ENCODE measurements at regions of chr2 and their contacts with region 1.

Region 1: GRCh38 chr2:3130889-3131635 is 246.6 kb downstream of the EIPR1 start:
- DNase-seq: no peak
- ATAC-seq: no peak
- H3K4me3 ChIP-seq: no peak overlapping the region
- H3K27ac ChIP-seq: no peak overlapping the region
- H3K4me1 ChIP-seq: no peaks in the 10 kb centered on the region
- H3K27me3 ChIP-seq: no peaks in the 10 kb centered on the region

Region 2: DNA sequence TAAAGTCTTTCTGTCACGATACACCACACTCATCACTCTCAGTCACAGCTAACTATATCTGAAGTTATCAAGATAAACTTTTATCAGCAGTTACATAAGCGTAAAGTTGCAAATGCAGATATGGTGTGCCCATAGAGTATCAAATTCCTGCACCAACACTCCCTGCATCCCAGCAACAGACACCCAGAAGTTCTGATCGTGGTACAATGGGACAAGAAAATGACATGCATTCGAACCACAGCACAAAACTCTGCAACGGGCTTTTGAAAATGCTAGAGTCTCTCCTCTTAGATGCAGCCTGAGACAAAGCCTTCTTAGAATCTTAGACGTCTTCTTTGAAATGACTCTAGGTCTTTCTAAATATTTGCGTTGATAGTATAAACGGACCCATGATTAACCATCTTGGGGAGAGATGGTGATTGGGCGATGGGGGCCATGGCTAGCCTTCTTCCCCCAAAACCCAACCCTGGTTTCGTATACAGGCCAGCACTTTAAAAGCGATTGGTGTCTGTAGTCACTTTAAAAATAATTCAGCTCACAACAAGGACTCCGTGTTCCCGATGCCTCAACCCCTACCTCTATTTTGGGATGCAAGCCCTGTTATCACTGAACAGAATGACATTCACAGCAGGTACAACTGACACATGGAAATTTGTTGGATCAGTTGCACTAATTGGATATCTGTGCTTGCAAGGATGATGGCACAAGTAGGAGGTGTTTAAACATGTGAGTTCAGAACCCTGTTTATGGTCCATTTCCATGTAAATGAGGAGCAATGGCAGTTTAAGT is 1086.6 kb before region 1 on chr2:
- intact Hi-C with region 1: loop called in 1 of 4 experiments (anchors 10 kb)
- DNase-seq: no peak
- ATAC-seq: peak; percentile 69 to 81
- H3K4me3 ChIP-seq: no peak overlapping the region
- H3K27ac ChIP-seq: peak overlapping the region; percentile 74
- H3K4me1 ChIP-seq: peaks cover 2% of the 10 kb centered on the region
- H3K27me3 ChIP-seq: no peaks in the 10 kb centered on the region

Region 3: DNA sequence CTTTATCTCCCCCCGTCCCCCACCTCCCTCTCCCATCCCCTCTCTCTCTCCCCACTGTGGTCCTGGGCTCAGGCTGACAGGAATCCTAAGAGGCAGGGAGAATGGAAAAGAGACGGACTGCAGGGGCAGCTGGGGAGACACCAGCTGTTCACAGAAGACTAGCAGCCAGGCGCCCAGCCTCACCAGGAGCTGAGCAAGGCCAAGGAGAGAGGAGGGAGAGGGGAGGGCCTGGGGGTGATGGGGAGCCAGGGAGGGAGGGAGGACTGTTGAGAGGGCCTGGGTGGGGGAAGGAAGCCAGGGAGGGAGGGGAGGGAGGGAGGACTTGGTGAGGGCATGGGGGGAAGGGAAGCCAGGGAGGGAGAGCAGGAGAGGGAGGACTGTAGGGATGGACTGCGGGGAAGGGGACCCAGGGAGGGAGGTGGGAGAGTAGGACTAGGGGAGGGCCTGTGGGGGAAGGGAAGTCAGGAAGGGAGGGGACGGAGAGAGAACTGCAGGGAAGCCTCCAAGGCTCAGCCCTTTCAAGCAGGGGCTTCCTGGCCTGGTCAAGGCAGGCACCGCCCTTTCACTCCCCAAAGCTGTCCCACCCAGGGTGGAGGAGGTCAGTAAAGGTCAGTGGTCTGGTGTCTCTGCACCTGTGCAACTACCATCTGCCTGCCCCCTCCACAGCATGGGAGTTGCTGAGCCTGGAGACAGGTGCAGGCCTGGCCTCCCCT is 282.3 kb before region 1 on chr2:
- intact Hi-C with region 1: no loop called
- DNase-seq: no peak
- ATAC-seq: no peak
- H3K4me3 ChIP-seq: no peak overlapping the region
- H3K27ac ChIP-seq: no peak overlapping the region
- H3K4me1 ChIP-seq: no peaks in the 10 kb centered on the region
- H3K27me3 ChIP-seq: no peaks in the 10 kb centered on the region

Region 4: DNA sequence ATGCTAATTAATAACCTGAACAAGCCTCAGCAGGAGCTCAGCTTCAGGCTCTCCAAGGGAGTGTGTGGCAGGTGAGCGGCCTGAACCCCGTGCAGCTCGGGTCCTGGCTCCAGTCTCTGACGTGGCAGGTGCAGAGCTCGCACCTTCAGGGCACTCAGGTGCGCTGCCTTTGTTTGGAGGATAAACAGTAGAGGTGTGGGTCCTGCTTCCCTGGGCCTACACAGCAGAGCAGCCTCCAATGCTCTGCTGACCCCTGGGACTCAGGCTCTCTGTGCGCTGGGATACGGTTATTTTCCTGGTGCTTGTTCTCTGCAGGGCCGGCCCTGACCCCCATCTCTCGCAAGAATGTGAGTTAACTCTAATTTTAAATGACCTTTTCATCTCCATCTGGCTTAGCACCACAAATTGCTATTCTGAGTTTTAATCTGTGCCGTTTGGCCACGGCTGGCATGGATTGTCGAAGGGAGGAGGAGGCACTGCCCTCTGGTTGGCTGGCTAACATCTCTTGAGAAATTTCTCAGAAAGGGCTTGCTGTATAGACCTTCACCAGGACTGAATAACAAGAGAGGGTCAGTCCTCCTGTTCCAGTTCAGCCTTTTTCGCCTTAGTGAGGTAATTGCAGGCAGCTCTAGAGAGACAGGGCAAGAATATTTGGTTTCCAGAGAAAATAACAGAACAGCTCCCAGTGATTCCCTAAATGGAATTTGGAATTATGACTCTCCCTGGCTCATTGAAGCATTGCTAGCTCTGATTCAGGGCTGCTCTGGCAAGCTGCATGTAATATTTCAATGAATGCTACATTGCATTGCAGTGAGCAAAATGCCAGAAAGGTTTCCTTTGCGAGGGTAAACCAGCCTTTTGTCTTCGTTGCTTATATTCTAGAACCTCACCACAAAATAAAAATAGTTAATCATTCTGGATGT is 734.1 kb after region 1 on chr2:
- intact Hi-C with region 1: no loop called
- DNase-seq: no peak
- ATAC-seq: peak in 1 of 2 donors; percentile 68
- H3K4me3 ChIP-seq: no peak overlapping the region
- H3K27ac ChIP-seq: no peak overlapping the region
- H3K4me1 ChIP-seq: no peaks in the 10 kb centered on the region
- H3K27me3 ChIP-seq: no peaks in the 10 kb centered on the region